ENCODE measurements at regions of chr10 and their contacts with region 1.

Region 1: DNA sequence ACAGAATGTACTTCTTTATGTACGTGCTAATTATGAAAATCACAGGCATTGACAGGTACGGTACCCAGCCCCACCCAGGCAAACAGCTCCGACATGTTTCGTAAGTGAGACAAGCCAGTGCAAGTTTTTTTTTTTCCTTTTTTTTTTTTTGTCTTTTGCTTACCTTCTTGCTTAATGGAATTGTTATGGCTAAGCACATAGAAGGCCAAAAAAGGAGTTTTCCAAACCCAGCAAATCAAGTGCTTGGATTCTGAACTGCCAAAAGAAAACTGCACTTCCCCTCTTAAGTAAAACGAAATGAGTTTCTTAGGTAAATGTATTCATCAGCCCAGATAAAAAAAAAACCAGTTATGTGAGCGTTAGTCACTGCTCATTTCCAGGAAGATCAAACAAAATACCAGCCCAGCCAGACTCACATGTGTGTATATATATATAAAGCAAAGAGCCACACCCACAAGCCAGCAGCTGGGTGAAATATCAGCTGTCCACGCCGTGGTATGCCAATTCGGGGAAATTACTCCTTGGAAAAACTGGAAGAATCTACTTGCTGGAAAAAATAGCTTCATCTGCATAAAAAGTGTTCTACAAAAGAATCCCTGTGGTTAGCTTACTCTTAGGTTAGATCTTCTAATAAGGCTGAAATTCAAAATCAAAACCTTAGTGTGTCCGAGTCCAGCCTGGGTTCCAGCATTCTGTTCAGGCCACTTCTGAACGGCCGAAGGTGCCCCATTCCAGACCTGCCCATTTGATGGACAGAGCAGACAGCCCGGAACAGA is 8.0 kb downstream of the KLF6 start:
- DNase-seq: peak; percentile 60 to 87 (median 66)
- ATAC-seq: peak; percentile 51
- H3K4me3 ChIP-seq: no peak overlapping the region
- H3K4me1 ChIP-seq: peaks cover 52% of the 10 kb centered on the region
- CTCF ChIP-seq: no peak

Region 2: DNA sequence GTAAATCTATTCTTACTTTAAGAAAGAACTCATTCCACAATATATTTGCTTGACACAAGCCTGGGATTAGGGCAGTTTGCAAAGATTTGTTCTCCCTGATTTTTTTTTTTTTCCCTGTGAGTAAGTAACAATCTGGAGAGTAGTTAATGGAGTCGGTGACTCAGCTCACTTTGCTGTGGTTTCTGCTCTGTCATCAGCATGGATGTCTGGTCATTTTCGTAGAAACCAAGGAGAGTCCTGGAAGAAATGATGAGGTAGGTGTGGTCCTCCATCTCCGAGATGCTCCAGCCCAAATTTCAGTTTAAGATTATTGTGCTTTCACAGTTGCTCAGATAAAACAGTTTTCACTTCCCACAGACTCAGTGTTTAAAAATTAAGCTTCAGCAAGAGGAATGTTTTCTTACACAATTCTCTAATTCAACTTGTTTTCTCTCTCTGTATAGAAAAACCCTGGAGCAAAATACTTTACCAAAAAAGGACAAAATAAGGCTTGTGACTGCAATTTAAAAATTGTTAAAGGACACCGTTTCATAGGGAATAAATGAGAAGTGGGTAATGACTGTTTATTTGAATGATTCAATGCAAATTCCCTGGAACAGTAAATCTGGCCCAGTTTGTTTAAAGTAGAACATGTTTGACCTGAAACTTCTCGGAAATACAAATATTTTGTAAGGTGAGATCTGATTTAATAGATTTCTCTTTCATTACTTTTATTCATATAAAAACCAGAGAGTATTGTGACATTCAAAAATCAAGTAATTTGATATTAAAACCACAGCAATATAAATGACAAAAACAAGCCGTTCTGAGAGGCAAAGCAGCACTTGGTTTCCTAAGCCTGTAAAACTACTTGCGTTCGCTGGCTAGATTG is 527.9 kb before region 1 on chr10:
- intact Hi-C with region 1: loop called (anchors 10 kb)
- DNase-seq: no peak
- ATAC-seq: peak; percentile 47
- H3K4me3 ChIP-seq: no peak overlapping the region
- H3K4me1 ChIP-seq: no peaks in the 10 kb centered on the region
- CTCF ChIP-seq: no peak

Region 3: GRCh38 chr10:3838460-3839437 is 61.8 kb after region 1 on chr10:
- intact Hi-C with region 1: no loop called
- DNase-seq: no peak
- ATAC-seq: peak; percentile 71
- H3K4me3 ChIP-seq: no peak overlapping the region
- H3K4me1 ChIP-seq: peaks cover 5% of the 10 kb centered on the region
- CTCF ChIP-seq: no peak

Region 4: GRCh38 chr10:4174197-4174596 is 397.2 kb after region 1 on chr10:
- intact Hi-C with region 1: no loop called
- DNase-seq: peak in 2 of 3 donors; percentile 32 to 47
- ATAC-seq: peak; percentile 30
- H3K4me3 ChIP-seq: no peak overlapping the region
- H3K4me1 ChIP-seq: no peaks in the 10 kb centered on the region
- CTCF ChIP-seq: no peak

Measured in mucosa of descending colon (tissue), 3 donors.